ENCODE measurements at regions of chr17 and their contacts with region 1.

Region 1: DNA sequence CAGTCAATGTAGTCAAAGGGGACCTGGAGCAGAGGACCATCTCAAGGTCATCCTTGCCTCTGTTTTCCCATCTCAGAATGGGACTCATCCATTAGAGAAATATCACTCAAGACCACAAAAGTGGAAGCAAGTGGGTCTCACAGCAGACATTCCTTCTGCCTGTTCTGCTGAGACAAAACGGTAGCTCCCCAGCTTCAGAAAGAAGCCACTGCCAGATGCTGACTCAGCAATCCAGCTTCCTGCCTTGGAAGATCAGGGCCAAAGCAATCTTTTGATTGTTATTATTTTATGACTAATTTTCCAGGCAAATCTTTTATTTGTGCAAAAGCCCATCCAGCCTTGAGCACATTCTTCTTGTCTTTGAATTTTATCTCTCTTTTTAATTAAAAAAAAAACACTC is 86.8 kb downstream of the CCT6B start:
- DNase-seq: no peak
- H3K4me3 ChIP-seq: no peak overlapping the region
- H3K27ac ChIP-seq: no peak overlapping the region
- H3K4me1 ChIP-seq: no peaks in the 10 kb centered on the region
- H3K27me3 ChIP-seq: no peaks in the 10 kb centered on the region
- CTCF ChIP-seq: no peak

Region 2: GRCh38 chr17:34776456-34777443 is 97.7 kb before region 1 on chr17:
- CTCF ChIA-PET with region 1: no interaction called
- dilution Hi-C with region 1: loop called (anchors 5 kb)
- in situ Hi-C with region 1: no loop called
- intact Hi-C with region 1: no loop called
- DNase-seq: no peak
- H3K4me3 ChIP-seq: no peak overlapping the region
- H3K27ac ChIP-seq: no peak overlapping the region
- H3K4me1 ChIP-seq: no peaks in the 10 kb centered on the region
- H3K27me3 ChIP-seq: no peaks in the 10 kb centered on the region
- CTCF ChIP-seq: no peak

Region 3: GRCh38 chr17:34816848-34817247 is 57.6 kb before region 1 on chr17:
- CTCF ChIA-PET with region 1: no interaction called
- dilution Hi-C with region 1: loop called (anchors 10 kb)
- in situ Hi-C with region 1: no loop called
- intact Hi-C with region 1: no loop called
- DNase-seq: no peak
- H3K4me3 ChIP-seq: no peak overlapping the region
- H3K27ac ChIP-seq: no peak overlapping the region
- H3K4me1 ChIP-seq: no peaks in the 10 kb centered on the region
- H3K27me3 ChIP-seq: no peaks in the 10 kb centered on the region
- CTCF ChIP-seq: no peak

Region 4: GRCh38 chr17:34961093-34961911 is 86.8 kb after region 1 on chr17 and contains the starts of genes CCT6B and ZNF830:
- CTCF ChIA-PET with region 1: no interaction called
- dilution Hi-C with region 1: loop called (anchors 10 kb)
- in situ Hi-C with region 1: no loop called
- intact Hi-C with region 1: no loop called
- DNase-seq: peak; percentile 90
- H3K4me3 ChIP-seq: peak within 1 kb of the TSS; percentile 78 to 92 (median 83)
- H3K27ac ChIP-seq: peak within 1 kb of the TSS; percentile 88
- H3K4me1 ChIP-seq: peaks cover 14% of the 10 kb centered on the region
- H3K27me3 ChIP-seq: no peaks in the 10 kb centered on the region
- CTCF ChIP-seq: no peak
- total RNA-seq, gene CCT6B: 3.0 to 3.6 TPM
- total RNA-seq, gene ZNF830: 6.5 to 12.6 TPM

Measured in mammary epithelial cell (primary cell).